ENCODE measurements at regions of chr2 and their contacts with region 1.

Region 1: DNA sequence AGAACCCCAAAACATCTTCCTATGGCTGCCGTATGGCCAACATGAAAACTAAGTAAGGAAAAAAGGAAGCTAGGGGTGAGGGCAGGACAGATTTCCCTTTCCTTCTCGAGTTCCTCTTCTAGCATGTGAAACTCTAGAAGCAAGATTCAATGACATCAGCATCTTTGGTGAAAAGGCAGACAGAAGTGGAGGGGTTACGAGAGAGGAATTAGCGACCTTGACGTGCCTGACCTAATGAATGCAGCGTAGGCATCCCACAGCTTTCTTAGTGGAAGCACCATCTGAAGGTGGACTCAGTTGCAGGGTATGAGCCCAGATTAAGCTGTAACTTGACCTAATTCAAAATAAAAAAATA is 47.9 kb upstream of the PELI1 start:
- DNase-seq: no peak
- ATAC-seq: peak; percentile 68
- H3K4me3 ChIP-seq: no peak overlapping the region
- H3K27ac ChIP-seq: no peak overlapping the region
- H3K4me1 ChIP-seq: peaks cover 26% of the 10 kb centered on the region
- H3K27me3 ChIP-seq: no peaks in the 10 kb centered on the region
- CTCF ChIP-seq: no peak
- EP300 ChIP-seq: no peak
- POLR2A ChIP-seq: no peak
- RAD21 ChIP-seq: no peak

Region 2: GRCh38 chr2:64173156-64174135 is 18.7 kb before region 1 on chr2:
- CTCF ChIA-PET with region 1: interaction called, 3 read pairs
- POLR2A ChIA-PET with region 1: interaction called, 4 read pairs
- RAD21 ChIA-PET with region 1: interaction called, 3 read pairs
- SMC1A ChIA-PET with region 1: interaction called, 15 read pairs
- in situ Hi-C with region 1: no loop called
- intact Hi-C with region 1: no loop called
- DNase-seq: no peak
- ATAC-seq: peak; percentile 64
- H3K4me3 ChIP-seq: no peak overlapping the region
- H3K27ac ChIP-seq: no peak overlapping the region
- H3K4me1 ChIP-seq: peaks cover 7% of the 10 kb centered on the region; the same call in 1 of the 2 replicates
- H3K27me3 ChIP-seq: no peaks in the 10 kb centered on the region
- CTCF ChIP-seq: no peak
- EP300 ChIP-seq: no peak
- POLR2A ChIP-seq: no peak
- RAD21 ChIP-seq: no peak

Region 3: GRCh38 chr2:64873472-64873924 is 681.4 kb after region 1 on chr2:
- CTCF ChIA-PET with region 1: no interaction called
- POLR2A ChIA-PET with region 1: no interaction called
- RAD21 ChIA-PET with region 1: no interaction called
- SMC1A ChIA-PET with region 1: no interaction called
- in situ Hi-C with region 1: no loop called
- intact Hi-C with region 1: no loop called
- DNase-seq: no peak
- ATAC-seq: peak; percentile 98
- H3K4me3 ChIP-seq: peak overlapping the region; percentile 23; the same call in 1 of the 2 replicates
- H3K27ac ChIP-seq: no peak overlapping the region
- H3K4me1 ChIP-seq: peaks cover 9% of the 10 kb centered on the region
- H3K27me3 ChIP-seq: no peaks in the 10 kb centered on the region
- CTCF ChIP-seq: peak; percentile 94 to 99 (median 98)
- EP300 ChIP-seq: no peak
- POLR2A ChIP-seq: no peak
- RAD21 ChIP-seq: peak; percentile 89